ENCODE measurements at regions of chr12 and their contacts with region 1.

Region 1: GRCh38 chr12:57846577-57847319 is at the start of gene CTDSP2:
- DNase-seq: peak; percentile 52 to 95 (median 88)
- ATAC-seq: peak; percentile 39
- H3K4me3 ChIP-seq: peak within 1 kb of the TSS; percentile 95 to 100
- H3K4me3 Mint-ChIP-seq: peak within 1 kb of the TSS; percentile 87
- H3K27ac ChIP-seq: peak within 1 kb of the TSS; percentile 81
- H3K27ac Mint-ChIP-seq: peak within 1 kb of the TSS; percentile 90
- H3K4me1 ChIP-seq: peaks cover 36% of the 10 kb centered on the region
- H3K4me1 Mint-ChIP-seq: peaks cover 45% of the 10 kb centered on the region
- H3K27me3 ChIP-seq: no peaks in the 10 kb centered on the region
- H3K27me3 Mint-ChIP-seq: peaks cover 4% of the 10 kb centered on the region
- CTCF ChIP-seq: no peak
- total RNA-seq, gene CTDSP2: 68.1 to 70.5 TPM

Region 2: DNA sequence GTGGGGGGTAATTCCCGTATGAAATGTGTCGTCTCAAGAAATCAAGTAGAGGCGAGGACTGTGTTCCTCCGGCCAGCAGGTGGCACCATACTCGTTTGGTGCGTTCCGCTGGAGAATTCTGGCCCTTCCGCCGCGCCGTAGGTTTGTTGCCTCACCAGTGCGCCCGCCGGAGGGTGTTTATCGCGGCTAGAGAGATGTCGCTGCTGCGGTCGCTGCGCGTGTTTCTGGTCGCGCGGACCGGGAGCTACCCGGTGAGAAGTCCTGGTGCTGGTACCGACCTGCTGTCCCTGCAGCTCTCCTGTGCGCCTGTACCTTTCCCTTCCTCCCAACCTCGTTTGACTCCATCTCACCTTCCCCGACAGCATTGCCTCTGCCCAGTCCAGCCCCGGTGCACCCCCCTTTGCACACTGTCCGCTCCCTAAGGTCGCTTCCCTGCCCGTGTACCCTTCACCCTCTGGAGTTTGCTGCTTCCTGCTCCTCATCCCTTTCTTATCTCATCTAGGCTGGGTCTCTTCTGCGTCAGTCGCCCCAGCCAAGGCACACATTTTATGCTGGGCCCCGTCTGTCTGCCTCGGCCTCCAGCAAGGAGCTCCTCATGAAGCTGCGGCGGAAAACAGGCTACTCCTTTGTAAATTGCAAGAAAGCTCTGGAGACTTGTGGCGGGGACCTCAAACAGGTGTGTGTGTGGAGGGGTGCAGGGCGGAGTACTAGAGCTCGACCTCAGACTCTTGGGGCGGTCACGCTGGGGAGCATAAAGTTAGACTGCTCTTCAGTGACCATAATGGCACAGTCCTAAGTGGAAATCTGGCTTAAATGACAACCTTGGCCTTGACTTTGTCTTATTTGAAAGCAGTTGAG is 63.9 kb before region 1 on chr12 and contains the start of gene TSFM:
- CTCF ChIA-PET with region 1: interaction called, 6 read pairs
- POLR2A ChIA-PET with region 1: interaction called, 7 read pairs
- intact Hi-C with region 1: loop called (anchors 5 kb)
- DNase-seq: peak; percentile 93 to 99 (median 97)
- ATAC-seq: peak; percentile 96
- H3K4me3 ChIP-seq: peak within 1 kb of the TSS; percentile 87 to 95
- H3K4me3 Mint-ChIP-seq: peak within 1 kb of the TSS; percentile 100
- H3K27ac ChIP-seq: peak within 1 kb of the TSS; percentile 72 to 85
- H3K27ac Mint-ChIP-seq: peak within 1 kb of the TSS; percentile 99
- H3K4me1 ChIP-seq: peaks cover 36% of the 10 kb centered on the region
- H3K4me1 Mint-ChIP-seq: peaks cover 51% of the 10 kb centered on the region
- H3K27me3 ChIP-seq: no peaks in the 10 kb centered on the region
- H3K27me3 Mint-ChIP-seq: no peaks in the 10 kb centered on the region
- CTCF ChIP-seq: peak; percentile 92
- total RNA-seq, gene TSFM: 37.0 to 37.1 TPM

Region 3: GRCh38 chr12:57829025-57829777 is 17.5 kb before region 1 on chr12:
- CTCF ChIA-PET with region 1: interaction called, 17 read pairs
- POLR2A ChIA-PET with region 1: interaction called, 14 read pairs
- intact Hi-C with region 1: loop called (anchors 2 kb)
- DNase-seq: no peak
- ATAC-seq: no peak
- H3K4me3 ChIP-seq: no peak overlapping the region
- H3K4me3 Mint-ChIP-seq: no peak overlapping the region
- H3K27ac ChIP-seq: no peak overlapping the region
- H3K27ac Mint-ChIP-seq: peak overlapping the region; percentile 49
- H3K4me1 ChIP-seq: peaks cover 39% of the 10 kb centered on the region
- H3K4me1 Mint-ChIP-seq: peaks cover 47% of the 10 kb centered on the region
- H3K27me3 ChIP-seq: no peaks in the 10 kb centered on the region
- H3K27me3 Mint-ChIP-seq: no peaks in the 10 kb centered on the region
- CTCF ChIP-seq: no peak

Region 4: GRCh38 chr12:57899010-57899662 is 52.4 kb after region 1 on chr12:
- CTCF ChIA-PET with region 1: interaction called, 19 read pairs
- POLR2A ChIA-PET with region 1: interaction called, 9 read pairs
- intact Hi-C with region 1: loop called in 1 of 2 experiments (anchors 5 kb)
- DNase-seq: peak; percentile 55 to 95 (median 76)
- ATAC-seq: peak; percentile 89
- H3K4me3 ChIP-seq: no peak overlapping the region
- H3K4me3 Mint-ChIP-seq: peak overlapping the region; percentile 71
- H3K27ac ChIP-seq: peak overlapping the region; percentile 55 to 78
- H3K27ac Mint-ChIP-seq: peak overlapping the region; percentile 99
- H3K4me1 ChIP-seq: peaks cover 45% of the 10 kb centered on the region
- H3K4me1 Mint-ChIP-seq: peaks cover 50% of the 10 kb centered on the region
- H3K27me3 ChIP-seq: no peaks in the 10 kb centered on the region
- H3K27me3 Mint-ChIP-seq: peaks cover 3% of the 10 kb centered on the region
- CTCF ChIP-seq: no peak

Region 5: DNA sequence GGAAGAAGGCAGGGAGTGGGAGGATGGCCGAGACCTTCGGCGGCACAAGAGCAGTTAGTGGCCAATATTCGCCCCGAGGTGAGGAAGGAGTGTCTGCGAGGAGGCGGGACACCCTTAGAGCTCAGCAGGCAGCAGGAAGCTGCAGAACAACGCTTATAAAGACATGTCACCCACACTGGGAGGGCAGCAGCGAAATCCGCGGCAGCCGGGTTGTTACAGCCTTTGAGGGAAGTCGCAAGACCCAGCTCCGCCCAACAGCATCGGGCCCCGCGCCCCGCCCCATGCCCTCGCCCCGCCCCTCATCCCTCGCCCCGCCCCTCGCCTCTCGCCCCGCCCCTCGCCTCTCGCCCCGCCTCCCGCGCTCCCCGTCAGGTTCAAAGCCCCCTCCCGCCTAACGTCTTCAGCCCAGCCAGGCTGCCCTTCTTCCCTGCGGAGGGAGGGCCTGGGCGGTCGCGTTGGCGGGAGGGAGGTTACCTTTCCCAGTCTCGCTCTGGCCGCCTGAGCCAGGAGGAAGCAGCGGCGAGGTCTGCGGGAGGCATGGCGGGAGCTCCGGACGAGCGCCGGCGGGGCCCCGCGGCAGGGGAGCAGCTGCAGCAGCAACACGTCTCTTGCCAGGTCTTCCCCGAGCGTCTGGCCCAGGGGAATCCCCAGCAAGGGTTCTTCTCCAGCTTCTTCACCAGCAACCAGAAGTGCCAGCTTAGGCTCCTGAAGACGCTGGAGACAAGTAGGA is 94.6 kb after region 1 on chr12 and contains the start of gene ATP23:
- CTCF ChIA-PET with region 1: interaction called, 3 read pairs
- POLR2A ChIA-PET with region 1: interaction called, 4 read pairs
- intact Hi-C with region 1: loop called (anchors 1 to 2 kb)
- DNase-seq: peak; percentile 82 to 96 (median 92)
- ATAC-seq: peak; percentile 92
- H3K4me3 ChIP-seq: peak within 1 kb of the TSS; percentile 65 to 97
- H3K4me3 Mint-ChIP-seq: peak within 1 kb of the TSS; percentile 97
- H3K27ac ChIP-seq: peak within 1 kb of the TSS; percentile 86 to 89
- H3K27ac Mint-ChIP-seq: peak within 1 kb of the TSS; percentile 98
- H3K4me1 ChIP-seq: peaks cover 29% of the 10 kb centered on the region
- H3K4me1 Mint-ChIP-seq: peaks cover 48% of the 10 kb centered on the region
- H3K27me3 ChIP-seq: no peaks in the 10 kb centered on the region
- H3K27me3 Mint-ChIP-seq: no peaks in the 10 kb centered on the region
- CTCF ChIP-seq: no peak
- total RNA-seq, gene ATP23: 3.6 to 4.7 TPM